ENCODE measurements at regions of chr5 and their contacts with region 1.

Region 1: GRCh38 chr5:38922199-38922598 is 76.4 kb downstream of the OSMR start:
- DNase-seq: peak; percentile 65
- H3K4me3 Mint-ChIP-seq: no peak overlapping the region
- H3K27ac Mint-ChIP-seq: no peak overlapping the region
- H3K4me1 Mint-ChIP-seq: no peaks in the 10 kb centered on the region
- H3K27me3 Mint-ChIP-seq: peaks cover 57% of the 10 kb centered on the region

Region 2: DNA sequence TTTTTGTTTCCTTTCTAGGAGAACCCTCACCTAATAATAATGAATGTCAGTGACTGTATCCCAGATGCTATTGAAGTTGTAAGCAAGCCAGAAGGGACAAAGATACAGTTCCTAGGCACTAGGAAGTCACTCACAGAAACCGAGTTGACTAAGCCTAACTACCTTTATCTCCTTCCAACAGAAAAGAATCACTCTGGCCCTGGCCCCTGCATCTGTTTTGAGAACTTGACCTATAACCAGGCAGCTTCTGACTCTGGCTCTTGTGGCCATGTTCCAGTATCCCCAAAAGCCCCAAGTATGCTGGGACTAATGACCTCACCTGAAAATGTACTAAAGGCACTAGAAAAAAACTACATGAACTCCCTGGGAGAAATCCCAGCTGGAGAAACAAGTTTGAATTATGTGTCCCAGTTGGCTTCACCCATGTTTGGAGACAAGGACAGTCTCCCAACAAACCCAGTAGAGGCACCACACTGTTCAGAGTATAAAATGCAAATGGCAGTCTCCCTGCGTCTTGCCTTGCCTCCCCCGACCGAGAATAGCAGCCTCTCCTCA is 10.7 kb after region 1 on chr5:
- CTCF ChIA-PET with region 1: interaction called, 17 read pairs
- DNase-seq: no peak
- H3K4me3 Mint-ChIP-seq: no peak overlapping the region
- H3K27ac Mint-ChIP-seq: no peak overlapping the region
- H3K4me1 Mint-ChIP-seq: no peaks in the 10 kb centered on the region
- H3K27me3 Mint-ChIP-seq: peaks cover 14% of the 10 kb centered on the region

Region 3: GRCh38 chr5:39015743-39016586 is 93.8 kb after region 1 on chr5:
- CTCF ChIA-PET with region 1: no interaction called
- DNase-seq: no peak
- H3K4me3 Mint-ChIP-seq: no peak overlapping the region
- H3K27ac Mint-ChIP-seq: peak overlapping the region; percentile 9
- H3K4me1 Mint-ChIP-seq: peaks cover 20% of the 10 kb centered on the region
- H3K27me3 Mint-ChIP-seq: no peaks in the 10 kb centered on the region

Region 4: DNA sequence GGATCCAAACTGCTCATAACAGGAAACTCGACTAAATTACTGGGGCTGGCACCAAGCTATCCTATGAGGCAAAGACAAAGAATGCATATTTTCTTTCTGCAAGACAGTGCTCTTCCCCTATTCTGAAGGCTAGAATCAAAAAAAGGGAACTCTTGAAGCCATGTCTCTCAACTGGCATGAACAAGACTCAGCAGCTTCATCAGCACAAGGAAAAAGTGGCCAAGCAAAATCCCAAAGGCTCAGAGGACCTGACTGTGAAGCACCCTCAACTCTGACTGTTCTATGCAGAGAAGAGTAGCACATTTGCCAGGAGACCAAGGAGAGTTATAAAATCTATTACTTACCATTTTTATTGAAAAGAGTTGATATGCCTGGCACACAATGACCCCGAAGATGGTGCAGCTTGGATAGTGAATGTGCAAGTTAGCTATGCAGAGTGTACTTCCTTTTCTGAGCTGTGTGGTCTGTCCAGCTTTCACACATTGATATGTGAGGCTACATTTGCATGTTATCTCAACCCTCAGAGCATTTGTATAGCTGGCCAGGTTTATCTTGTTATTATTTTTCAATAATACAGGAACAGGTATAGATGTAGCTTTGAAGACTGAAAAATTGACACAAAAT is 348.1 kb after region 1 on chr5:
- CTCF ChIA-PET with region 1: no interaction called
- DNase-seq: no peak
- H3K4me3 Mint-ChIP-seq: no peak overlapping the region
- H3K27ac Mint-ChIP-seq: no peak overlapping the region
- H3K4me1 Mint-ChIP-seq: peaks cover 54% of the 10 kb centered on the region
- H3K27me3 Mint-ChIP-seq: no peaks in the 10 kb centered on the region

Measured in activated naive CD4-positive, alpha-beta T cell treated with anti-CD3 and anti-CD28 coated beads, Interleukin-2, amount 10 ng/mL, durations not matched to agents 7 days and 5 days (primary cell).